Activated CD4-positive, alpha-beta memory T cell treated with anti-CD3 and anti-CD28 coated beads for 36 hours (primary cell): ENCODE measurements at regions of chr6 and their contacts with region 1.

Region 1: GRCh38 chr6:13336553-13336952 is 8.2 kb upstream of the TBC1D7 start:
- DNase-seq: peak; percentile 79
- H3K4me3 Mint-ChIP-seq: no peak overlapping the region
- H3K27ac Mint-ChIP-seq: no peak overlapping the region
- H3K4me1 Mint-ChIP-seq: peaks cover 6% of the 10 kb centered on the region
- H3K27me3 Mint-ChIP-seq: no peaks in the 10 kb centered on the region

Region 2: DNA sequence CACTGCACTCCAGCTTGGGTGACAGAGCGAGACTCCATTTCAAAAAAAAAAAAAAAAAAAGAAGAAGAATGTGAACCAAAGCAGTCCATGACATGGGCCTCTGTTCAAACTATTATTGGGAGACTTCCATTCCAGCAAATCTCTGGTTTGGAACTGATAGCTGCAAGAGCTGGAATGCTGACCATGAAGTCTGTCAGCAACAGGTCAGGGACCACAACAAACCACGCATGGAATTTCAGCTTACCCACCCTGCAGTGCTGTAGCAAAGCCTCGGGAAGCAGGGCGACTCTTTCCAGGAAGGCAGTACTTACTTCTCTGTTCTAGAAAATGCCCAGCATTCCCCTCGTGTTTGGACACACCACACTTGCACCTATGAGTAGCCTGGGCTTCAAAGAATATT is 25.9 kb after region 1 on chr6:
- CTCF ChIA-PET with region 1: no interaction called
- POLR2A ChIA-PET with region 1: no interaction called
- intact Hi-C with region 1: no loop called
- DNase-seq: no peak
- H3K4me3 Mint-ChIP-seq: no peak overlapping the region
- H3K27ac Mint-ChIP-seq: no peak overlapping the region
- H3K4me1 Mint-ChIP-seq: peaks cover 5% of the 10 kb centered on the region
- H3K27me3 Mint-ChIP-seq: no peaks in the 10 kb centered on the region

Region 3: GRCh38 chr6:13538084-13538483 is 201.5 kb after region 1 on chr6:
- CTCF ChIA-PET with region 1: interaction called, 6 read pairs
- POLR2A ChIA-PET with region 1: no interaction called
- intact Hi-C with region 1: loop called (anchors 1 kb)
- DNase-seq: no peak
- H3K4me3 Mint-ChIP-seq: no peak overlapping the region
- H3K27ac Mint-ChIP-seq: no peak overlapping the region
- H3K4me1 Mint-ChIP-seq: no peaks in the 10 kb centered on the region
- H3K27me3 Mint-ChIP-seq: no peaks in the 10 kb centered on the region